CD4-positive, alpha-beta T cell (primary cell): ENCODE measurements at regions of chr17 and their contacts with region 1.

Region 1: GRCh38 chr17:40909351-40909750 is 24.3 kb upstream of the KRT20 start:
- DNase-seq: peak; percentile 38 to 85 (median 58)
- ATAC-seq: peak; percentile 91
- H3K4me3 ChIP-seq: no peak overlapping the region
- H3K4me3 Mint-ChIP-seq: no peak overlapping the region
- H3K27ac ChIP-seq: no peak overlapping the region
- H3K27ac Mint-ChIP-seq: no peak overlapping the region
- H3K4me1 ChIP-seq: no peaks in the 10 kb centered on the region
- H3K4me1 Mint-ChIP-seq: no peaks in the 10 kb centered on the region
- H3K27me3 ChIP-seq: peaks cover 2 to 25% of the 10 kb centered on the region in 2 experiments
- H3K27me3 Mint-ChIP-seq: peaks cover 59% of the 10 kb centered on the region
- CTCF ChIP-seq: peak; percentile 82

Region 2: GRCh38 chr17:40803617-40804082 is 105.7 kb before region 1 on chr17:
- CTCF ChIA-PET with region 1: no interaction called
- POLR2A ChIA-PET with region 1: no interaction called
- intact Hi-C with region 1: loop called in 1 of 2 experiments (anchors 5 kb)
- DNase-seq: peak; percentile 51 to 85 (median 66)
- ATAC-seq: peak; percentile 89
- H3K4me3 ChIP-seq: no peak overlapping the region
- H3K4me3 Mint-ChIP-seq: no peak overlapping the region
- H3K27ac ChIP-seq: no peak overlapping the region
- H3K27ac Mint-ChIP-seq: no peak overlapping the region
- H3K4me1 ChIP-seq: no peaks in the 10 kb centered on the region
- H3K4me1 Mint-ChIP-seq: peaks cover 4% of the 10 kb centered on the region
- H3K27me3 ChIP-seq: peaks cover 11 to 58% of the 10 kb centered on the region in 2 experiments
- H3K27me3 Mint-ChIP-seq: peaks cover 54% of the 10 kb centered on the region
- CTCF ChIP-seq: peak; percentile 91

Region 3: GRCh38 chr17:41308251-41308917 is 399.0 kb after region 1 on chr17:
- CTCF ChIA-PET with region 1: no interaction called
- POLR2A ChIA-PET with region 1: no interaction called
- intact Hi-C with region 1: loop called in 1 of 2 experiments (anchors 5 kb)
- DNase-seq: peak; percentile 71 to 96 (median 84)
- ATAC-seq: peak; percentile 82
- H3K4me3 ChIP-seq: peak overlapping the region; percentile 36
- H3K4me3 Mint-ChIP-seq: peak overlapping the region; percentile 81
- H3K27ac ChIP-seq: peak overlapping the region; percentile 69 to 83
- H3K27ac Mint-ChIP-seq: peak overlapping the region; percentile 98
- H3K4me1 ChIP-seq: peaks cover 55% of the 10 kb centered on the region
- H3K4me1 Mint-ChIP-seq: peaks cover 69% of the 10 kb centered on the region
- H3K27me3 ChIP-seq: no peaks in the 10 kb centered on the region
- H3K27me3 Mint-ChIP-seq: no peaks in the 10 kb centered on the region
- CTCF ChIP-seq: no peak

Region 4: GRCh38 chr17:41496820-41497408 is 587.6 kb after region 1 on chr17:
- CTCF ChIA-PET with region 1: no interaction called
- POLR2A ChIA-PET with region 1: no interaction called
- intact Hi-C with region 1: loop called in 1 of 2 experiments (anchors 1 kb)
- DNase-seq: peak; percentile 19 to 82 (median 44)
- ATAC-seq: peak; percentile 88
- H3K4me3 ChIP-seq: no peak overlapping the region
- H3K4me3 Mint-ChIP-seq: no peak overlapping the region
- H3K27ac ChIP-seq: no peak overlapping the region
- H3K27ac Mint-ChIP-seq: no peak overlapping the region
- H3K4me1 ChIP-seq: peaks cover 27% of the 10 kb centered on the region
- H3K4me1 Mint-ChIP-seq: peaks cover 25% of the 10 kb centered on the region
- H3K27me3 ChIP-seq: no peaks in the 10 kb centered on the region
- H3K27me3 Mint-ChIP-seq: no peaks in the 10 kb centered on the region
- CTCF ChIP-seq: peak; percentile 41

Region 5: DNA sequence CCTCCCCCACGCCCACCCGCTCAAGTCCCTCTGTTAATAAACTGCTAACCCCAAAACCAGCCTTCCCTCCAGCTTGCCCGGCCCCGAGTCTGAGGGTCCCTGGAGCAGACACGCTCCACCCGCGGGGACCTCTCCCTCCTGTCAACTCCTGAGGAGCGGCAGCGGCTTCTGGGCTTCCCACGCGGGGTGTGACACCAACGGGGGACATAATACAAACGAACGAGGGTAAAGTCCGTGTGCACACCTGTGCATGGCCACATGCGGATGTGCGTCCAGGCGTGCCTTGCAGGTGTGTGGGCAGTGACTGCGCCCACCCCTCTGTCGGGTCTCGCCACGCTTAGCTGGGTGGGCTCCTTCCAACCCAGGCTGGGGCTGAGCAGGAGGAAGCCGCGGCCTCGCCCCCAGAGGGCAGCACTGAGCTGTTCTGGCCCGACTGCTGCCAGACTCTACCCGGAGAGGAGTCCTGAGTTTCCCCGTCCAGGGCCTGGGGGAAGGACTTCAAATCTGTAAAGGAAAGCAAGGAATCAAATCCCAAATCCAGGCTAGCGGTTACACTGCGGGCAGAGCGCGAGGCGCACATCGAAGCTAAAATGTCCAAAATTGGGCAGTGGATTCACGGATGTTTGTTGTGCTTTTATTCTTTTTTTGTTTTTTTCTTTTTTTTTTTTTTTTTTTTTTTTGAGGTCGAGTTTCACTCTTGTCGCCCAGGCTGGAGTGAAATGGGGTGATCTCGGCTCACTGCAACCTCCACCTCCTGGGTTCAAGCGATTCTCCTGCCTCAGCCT is 739.3 kb after region 1 on chr17:
- CTCF ChIA-PET with region 1: interaction called, 9 read pairs
- POLR2A ChIA-PET with region 1: no interaction called
- intact Hi-C with region 1: loop called (anchors 1 kb)
- DNase-seq: peak; percentile 70 to 92 (median 82)
- ATAC-seq: peak; percentile 88
- H3K4me3 ChIP-seq: peak overlapping the region; percentile 67
- H3K4me3 Mint-ChIP-seq: peak overlapping the region; percentile 86
- H3K27ac ChIP-seq: no peak overlapping the region
- H3K27ac Mint-ChIP-seq: peak overlapping the region; percentile 50
- H3K4me1 ChIP-seq: peaks cover 15% of the 10 kb centered on the region
- H3K4me1 Mint-ChIP-seq: peaks cover 12% of the 10 kb centered on the region
- H3K27me3 ChIP-seq: no peaks in the 10 kb centered on the region
- H3K27me3 Mint-ChIP-seq: no peaks in the 10 kb centered on the region
- CTCF ChIP-seq: peak; percentile 81

Region 6: GRCh38 chr17:41758601-41759000 is 849.2 kb after region 1 on chr17:
- CTCF ChIA-PET with region 1: no interaction called
- POLR2A ChIA-PET with region 1: no interaction called
- intact Hi-C with region 1: no loop called
- DNase-seq: no peak
- ATAC-seq: no peak
- H3K4me3 ChIP-seq: no peak overlapping the region
- H3K4me3 Mint-ChIP-seq: no peak overlapping the region
- H3K27ac ChIP-seq: no peak overlapping the region
- H3K27ac Mint-ChIP-seq: no peak overlapping the region
- H3K4me1 ChIP-seq: no peaks in the 10 kb centered on the region
- H3K4me1 Mint-ChIP-seq: no peaks in the 10 kb centered on the region
- H3K27me3 ChIP-seq: no peaks in the 10 kb centered on the region
- H3K27me3 Mint-ChIP-seq: no peaks in the 10 kb centered on the region
- CTCF ChIP-seq: no peak